Activated T-helper 1 cell treated with anti-CD3 and anti-CD28 coated beads, Interleukin-12 subunit alpha, Interleukin-12 subunit beta, Interleukin-2, Interleukin-4 antibody, amounts not matched to agents 30 ng/mL and 10 ng/mL and 1 ng/mL, durations not matched to agents 14 hours and 24 hours and 36 hours (primary cell): ENCODE measurements at regions of chr11 and their contacts with region 1.

Region 1: DNA sequence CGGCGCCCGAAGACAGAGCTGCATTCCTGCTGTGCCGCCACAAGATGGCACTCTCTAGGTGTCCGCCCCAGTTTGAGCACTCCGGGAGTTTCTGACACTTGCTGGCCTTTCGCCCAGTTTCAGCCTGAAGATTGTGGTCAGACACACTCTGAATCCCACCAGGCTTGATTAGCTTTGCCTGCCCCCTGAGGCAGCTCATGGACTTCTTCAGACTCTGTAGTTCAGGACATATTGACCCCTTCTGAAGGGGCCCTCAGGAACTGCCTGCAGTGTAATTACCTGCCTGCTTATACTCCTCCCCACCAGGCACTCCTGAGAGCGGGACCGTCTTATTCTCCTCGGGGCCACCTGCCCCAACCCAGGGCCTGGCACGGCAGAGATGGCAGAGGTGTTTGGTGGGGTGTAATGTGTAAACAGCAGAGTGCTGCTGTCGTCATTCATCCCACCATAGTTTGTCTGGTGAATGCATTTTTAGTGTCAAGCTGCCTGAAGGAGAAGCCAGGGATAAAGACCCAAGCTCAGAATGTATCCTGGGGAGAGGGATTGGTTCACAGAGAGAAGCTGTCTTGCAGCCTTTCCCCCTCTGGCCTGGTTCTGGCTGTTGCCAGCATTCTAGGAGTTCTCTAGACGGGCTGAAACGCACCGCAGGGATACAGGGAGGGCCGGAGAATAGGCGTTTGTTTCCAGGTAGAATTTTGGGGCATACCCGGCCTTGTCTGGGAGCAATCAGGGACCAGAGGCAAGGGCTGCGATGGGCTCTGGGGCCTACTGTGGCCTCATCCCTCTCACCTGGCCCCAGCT is 46.4 kb downstream of the EIF3F start:
- DNase-seq: peak; percentile 28
- H3K4me3 Mint-ChIP-seq: no peak overlapping the region
- H3K27ac Mint-ChIP-seq: no peak overlapping the region
- H3K4me1 Mint-ChIP-seq: no peaks in the 10 kb centered on the region
- H3K27me3 Mint-ChIP-seq: peaks cover 22% of the 10 kb centered on the region

Region 2: GRCh38 chr11:8099291-8099899 is 65.9 kb after region 1 on chr11:
- intact Hi-C with region 1: loop called (anchors 1 kb)
- DNase-seq: peak; percentile 43
- H3K4me3 Mint-ChIP-seq: no peak overlapping the region
- H3K27ac Mint-ChIP-seq: no peak overlapping the region
- H3K4me1 Mint-ChIP-seq: no peaks in the 10 kb centered on the region
- H3K27me3 Mint-ChIP-seq: no peaks in the 10 kb centered on the region

Region 3: GRCh38 chr11:8328848-8329330 is 295.4 kb after region 1 on chr11:
- intact Hi-C with region 1: no loop called
- DNase-seq: peak; percentile 42
- H3K4me3 Mint-ChIP-seq: no peak overlapping the region
- H3K27ac Mint-ChIP-seq: no peak overlapping the region
- H3K4me1 Mint-ChIP-seq: no peaks in the 10 kb centered on the region
- H3K27me3 Mint-ChIP-seq: peaks cover 6% of the 10 kb centered on the region